ENCODE measurements at regions of chr15 and their contacts with region 1.

Region 1: DNA sequence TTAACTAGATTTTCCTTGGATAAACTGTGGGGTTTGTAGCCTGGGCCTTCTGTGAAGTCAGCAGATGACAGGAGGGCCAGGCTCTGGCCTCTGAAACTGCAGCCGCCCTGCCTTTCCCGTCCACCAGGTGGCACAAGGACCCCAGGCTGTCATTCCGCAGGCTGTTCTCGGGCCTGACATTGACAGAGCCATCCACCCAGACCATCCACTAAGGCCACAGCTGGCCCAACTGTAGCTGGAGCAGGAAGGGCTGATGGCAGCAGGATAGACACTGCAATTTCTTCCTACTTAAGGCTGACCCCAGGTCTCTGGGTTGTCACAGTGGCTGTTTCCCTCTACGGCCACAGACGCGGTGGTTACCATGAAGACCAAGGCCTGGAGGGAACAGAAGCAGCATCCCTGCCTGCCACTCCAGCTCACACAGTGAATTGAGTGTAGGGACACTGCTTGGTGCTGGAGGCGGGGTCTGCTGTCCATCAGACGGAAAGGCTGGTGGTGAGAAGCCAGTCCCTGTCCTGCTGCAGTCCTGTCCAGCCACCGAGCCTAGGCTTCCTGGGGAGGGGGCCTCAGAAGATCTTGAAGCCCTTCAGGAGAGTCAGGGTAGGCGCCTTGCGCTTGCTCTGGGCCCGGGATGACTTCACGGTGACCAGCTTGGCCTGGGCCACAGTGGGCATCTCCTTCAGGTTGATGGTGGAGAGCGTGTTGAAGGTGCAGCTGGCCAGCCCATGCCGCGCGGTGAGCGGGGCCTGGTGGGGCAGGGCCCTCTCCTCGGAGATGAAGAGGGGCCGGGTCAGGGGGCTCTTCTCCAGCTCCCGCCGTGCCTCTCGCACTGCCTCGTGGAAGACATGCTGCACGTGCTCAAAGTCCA is 9.4 kb downstream of the SLC51B start:
- DNase-seq: no peak
- H3K4me3 ChIP-seq: no peak overlapping the region
- CTCF ChIP-seq: peak; percentile 97

Region 2: DNA sequence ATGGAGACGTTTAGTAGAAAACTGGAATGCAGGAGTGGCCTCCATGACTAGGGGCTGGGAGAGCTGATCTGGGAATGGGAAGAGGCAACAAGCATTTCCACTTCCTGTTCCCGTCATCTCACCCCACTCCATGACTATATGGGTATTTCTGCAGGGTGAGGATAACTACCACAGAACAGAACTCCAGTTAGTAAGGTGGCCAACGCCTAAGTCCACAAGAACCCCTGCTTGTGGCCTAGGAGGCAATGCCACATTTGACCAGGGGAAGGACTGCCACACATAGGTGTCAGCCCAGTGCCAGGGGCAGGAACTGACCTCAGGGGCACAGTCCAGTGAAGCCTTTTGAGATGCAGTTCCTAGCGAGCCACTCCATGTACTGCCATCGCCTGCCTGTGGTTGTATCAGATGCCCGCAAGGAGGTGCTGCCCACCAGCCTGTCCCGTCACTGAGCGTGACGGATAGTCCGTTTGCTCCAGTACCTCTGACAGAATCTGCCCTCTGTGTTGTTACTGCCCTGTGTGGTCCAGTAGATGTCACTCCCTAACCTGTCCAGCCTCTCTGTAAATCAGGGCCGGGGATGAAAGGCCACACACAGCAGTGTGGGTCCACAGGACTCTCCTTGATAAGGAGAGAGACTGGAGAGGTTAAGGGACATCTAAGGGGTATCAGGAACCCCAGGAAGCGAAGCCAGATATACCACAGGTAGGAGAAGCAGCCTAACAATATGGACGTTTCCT is 21.6 kb before region 1 on chr15:
- CTCF ChIA-PET with region 1: interaction called, 29 read pairs
- POLR2A ChIA-PET with region 1: no interaction called
- DNase-seq: no peak
- H3K4me3 ChIP-seq: no peak overlapping the region
- CTCF ChIP-seq: peak; percentile 83

Region 3: DNA sequence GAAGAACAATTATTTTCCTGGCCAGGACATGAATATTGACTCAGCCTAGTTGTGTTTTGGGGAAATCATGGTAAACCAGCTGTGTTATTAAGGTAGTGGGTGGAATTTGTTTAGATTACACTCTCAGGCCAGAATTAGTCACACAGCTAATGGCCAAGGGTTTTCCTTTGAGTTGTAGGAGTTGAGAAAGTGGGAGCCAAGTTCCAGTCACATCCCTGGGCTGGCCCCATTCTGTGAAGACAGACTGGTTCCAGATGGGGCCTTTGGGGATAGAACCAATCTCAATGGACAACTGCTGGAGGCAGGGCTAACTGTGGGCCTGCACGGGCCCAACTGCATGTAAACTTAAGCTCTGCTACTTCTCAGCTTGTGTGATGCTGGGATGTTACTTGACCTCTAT is 14.6 kb after region 1 on chr15:
- CTCF ChIA-PET with region 1: interaction called, 135 read pairs
- POLR2A ChIA-PET with region 1: no interaction called
- DNase-seq: peak; percentile 47
- H3K4me3 ChIP-seq: no peak overlapping the region
- CTCF ChIP-seq: no peak

Region 4: DNA sequence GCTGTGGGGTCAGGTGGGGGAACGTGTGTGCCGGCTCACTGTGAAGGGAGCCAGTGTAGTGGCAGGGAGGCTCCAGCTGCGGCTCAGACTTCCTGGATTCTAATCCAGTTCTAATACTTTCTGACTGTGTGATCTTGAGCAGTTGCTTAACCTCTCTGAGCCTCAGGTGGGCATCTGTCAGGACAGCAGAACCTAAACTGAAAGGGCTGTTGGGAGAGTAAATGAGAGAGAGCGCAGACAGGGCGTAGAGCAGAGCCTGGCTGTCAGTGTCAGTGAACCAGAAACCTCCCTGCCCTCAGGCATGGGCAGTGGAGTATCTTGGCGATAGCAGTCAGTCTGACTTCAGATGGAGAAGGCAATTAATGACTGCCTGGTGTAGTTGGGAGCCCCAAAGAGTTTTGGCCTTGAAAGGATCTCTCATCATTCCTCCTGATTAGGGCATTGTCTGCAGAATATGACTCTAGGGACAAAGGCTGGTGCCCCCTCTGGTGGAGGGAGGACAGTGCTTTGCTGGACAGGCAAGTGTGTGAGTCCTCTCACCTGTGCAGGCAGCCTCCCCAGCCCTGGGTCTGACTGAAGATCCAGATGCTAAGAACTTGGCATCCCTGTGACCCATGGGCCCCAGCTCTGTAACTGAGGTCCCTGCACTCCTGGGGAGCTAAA is 31.6 kb after region 1 on chr15:
- CTCF ChIA-PET with region 1: interaction called, 338 read pairs
- POLR2A ChIA-PET with region 1: no interaction called
- DNase-seq: no peak
- H3K4me3 ChIP-seq: no peak overlapping the region
- CTCF ChIP-seq: peak; percentile 55

Region 5: DNA sequence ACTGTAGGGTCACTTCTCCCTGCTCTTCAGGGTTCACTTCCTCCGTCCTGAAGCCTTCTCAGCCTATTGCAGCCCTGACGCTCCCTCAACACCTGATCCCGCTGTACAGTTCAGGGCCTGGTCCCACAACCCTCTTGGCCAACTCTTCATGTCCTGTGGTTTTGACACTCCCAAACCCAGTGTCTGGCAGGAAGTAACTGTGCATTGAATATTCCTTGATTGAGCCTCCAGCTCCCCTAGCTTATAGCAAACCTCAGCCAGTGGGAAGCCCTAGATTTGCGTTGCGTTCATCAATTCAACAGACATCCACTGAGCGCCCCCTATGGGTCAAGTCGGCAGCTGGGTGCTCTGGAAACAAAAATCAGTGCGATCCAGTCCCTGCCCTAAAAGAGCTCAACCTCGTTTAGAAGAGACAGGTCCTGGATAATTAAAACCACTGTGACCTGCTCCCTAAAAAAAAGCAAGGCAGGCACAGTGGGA is 46.9 kb after region 1 on chr15:
- CTCF ChIA-PET with region 1: interaction called, 133 read pairs
- POLR2A ChIA-PET with region 1: no interaction called
- DNase-seq: no peak
- H3K4me3 ChIP-seq: no peak overlapping the region
- CTCF ChIP-seq: peak; percentile 74

Region 6: DNA sequence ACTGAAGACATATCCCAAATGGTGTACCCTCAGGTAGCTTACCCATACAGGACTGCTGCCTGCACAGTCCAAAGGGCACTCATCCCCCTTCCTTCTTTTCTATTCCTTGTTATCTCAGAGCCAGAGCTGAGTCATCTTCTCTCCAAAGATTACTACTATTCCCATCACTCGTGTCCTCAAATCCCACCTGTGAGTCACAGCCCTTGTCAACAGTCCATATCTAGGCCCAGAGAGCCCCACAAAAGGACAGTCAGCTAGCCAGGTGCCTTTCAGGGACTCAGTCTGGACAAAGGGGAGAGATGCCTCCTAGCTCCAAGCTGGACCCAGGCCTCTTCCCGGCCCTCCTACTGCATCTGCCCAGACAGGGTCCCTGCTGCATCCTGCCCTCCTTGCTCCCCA is 221.2 kb after region 1 on chr15:
- CTCF ChIA-PET with region 1: interaction called, 23 read pairs
- POLR2A ChIA-PET with region 1: no interaction called
- DNase-seq: no peak
- H3K4me3 ChIP-seq: no peak overlapping the region
- CTCF ChIP-seq: no peak

Region 7: GRCh38 chr15:65326117-65326526 is 271.6 kb after region 1 on chr15:
- CTCF ChIA-PET with region 1: no interaction called
- POLR2A ChIA-PET with region 1: no interaction called
- DNase-seq: no peak
- H3K4me3 ChIP-seq: no peak overlapping the region
- CTCF ChIP-seq: no peak